ENCODE measurements at regions of chr12 and their contacts with region 1.

Region 1: GRCh38 chr12:91811481-91812287 is 334.0 kb downstream of the BTG1 start:
- DNase-seq: no peak
- H3K4me3 ChIP-seq: no peak overlapping the region
- H3K27ac ChIP-seq: no peak overlapping the region
- H3K4me1 ChIP-seq: peaks cover 4% of the 10 kb centered on the region
- H3K27me3 ChIP-seq: no peaks in the 10 kb centered on the region
- CTCF ChIP-seq: peak; percentile 38 to 74 (median 67)
- POLR2A ChIP-seq: no peak

Region 2: GRCh38 chr12:91732086-91732485 is 79.6 kb before region 1 on chr12:
- intact Hi-C with region 1: no loop called
- DNase-seq: no peak
- H3K4me3 ChIP-seq: no peak overlapping the region
- H3K27ac ChIP-seq: no peak overlapping the region
- H3K4me1 ChIP-seq: no peaks in the 10 kb centered on the region
- H3K27me3 ChIP-seq: no peaks in the 10 kb centered on the region
- CTCF ChIP-seq: peak in 1 of 3 experiments; percentile 21
- POLR2A ChIP-seq: no peak

Region 3: DNA sequence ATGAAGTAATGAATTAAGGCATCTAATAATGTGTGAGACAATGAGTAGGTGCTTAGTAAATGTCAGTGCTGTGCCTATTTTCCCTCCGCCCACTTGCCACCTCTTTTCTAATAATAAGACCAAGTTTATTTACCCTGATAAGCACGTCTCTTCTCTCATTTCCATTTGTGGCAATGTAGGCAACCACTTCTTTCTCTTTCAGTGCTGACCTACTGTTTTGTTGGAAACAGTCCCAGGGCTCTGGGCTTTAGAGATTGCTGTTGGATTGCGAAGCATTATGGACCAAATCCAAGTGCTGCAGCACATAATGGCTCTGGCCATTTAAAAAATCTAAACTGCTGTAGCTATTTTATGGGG is 749.8 kb after region 1 on chr12:
- intact Hi-C with region 1: loop called (anchors 10 kb)
- DNase-seq: no peak
- H3K4me3 ChIP-seq: no peak overlapping the region
- H3K27ac ChIP-seq: peak overlapping the region; percentile 63
- H3K4me1 ChIP-seq: peaks cover 22% of the 10 kb centered on the region
- H3K27me3 ChIP-seq: no peaks in the 10 kb centered on the region
- CTCF ChIP-seq: no peak
- POLR2A ChIP-seq: no peak